A673 (cell line): ENCODE measurements at regions of chr1 and their contacts with region 1.

Region 1: DNA sequence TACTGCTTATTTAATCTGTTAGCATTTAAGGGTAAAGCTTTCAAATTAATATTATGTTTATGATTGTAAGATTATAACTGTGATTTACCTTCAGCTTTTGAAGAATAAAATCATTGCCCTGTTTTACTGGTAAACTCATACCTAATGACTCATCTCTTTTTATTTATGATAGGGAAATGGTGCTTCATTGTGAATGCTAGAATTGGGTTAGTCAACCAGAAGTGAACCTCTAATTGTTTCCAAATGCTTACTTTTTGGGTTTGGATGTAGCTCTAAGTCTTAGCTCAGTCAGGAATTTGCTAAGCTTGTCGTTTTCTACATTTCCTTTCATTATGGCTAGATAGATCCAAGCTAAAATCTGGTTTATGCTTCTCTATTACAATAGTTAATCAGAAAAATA is 59.4 kb downstream of the SLC30A7 start:
- DNase-seq: peak; percentile 86
- H3K4me3 ChIP-seq: no peak overlapping the region
- H3K27ac ChIP-seq: peak overlapping the region; percentile 45
- H3K4me1 ChIP-seq: peaks cover 47% of the 10 kb centered on the region
- H3K27me3 ChIP-seq: no peaks in the 10 kb centered on the region
- CTCF ChIP-seq: no peak

Region 2: DNA sequence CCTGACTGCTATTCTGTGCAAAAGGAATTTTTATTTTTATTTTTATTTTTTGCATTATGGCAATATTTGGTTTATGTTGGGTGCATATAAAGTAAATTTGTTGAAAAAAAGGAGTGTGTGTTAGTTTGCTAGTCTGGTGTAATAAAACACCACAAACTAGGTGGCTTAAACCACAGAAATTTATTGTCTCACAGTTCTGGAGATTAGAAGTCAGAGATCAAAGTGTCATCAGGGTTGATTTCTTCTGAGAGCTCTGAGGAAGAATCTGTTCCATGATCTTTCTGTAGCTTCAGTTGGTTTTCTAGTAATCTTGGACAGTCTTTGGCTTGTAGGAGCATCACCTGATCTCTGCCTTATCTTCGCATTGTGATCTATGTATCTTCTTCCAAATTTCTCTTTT is 53.0 kb before region 1 on chr1:
- CTCF ChIA-PET with region 1: no interaction called
- POLR2A ChIA-PET with region 1: no interaction called
- intact Hi-C with region 1: loop called (anchors 5 kb)
- DNase-seq: no peak
- H3K4me3 ChIP-seq: no peak overlapping the region
- H3K27ac ChIP-seq: no peak overlapping the region
- H3K4me1 ChIP-seq: peaks cover 3% of the 10 kb centered on the region
- H3K27me3 ChIP-seq: no peaks in the 10 kb centered on the region
- CTCF ChIP-seq: no peak

Region 3: GRCh38 chr1:101025657-101026504 is 70.6 kb after region 1 on chr1 and contains the start of gene DPH5:
- CTCF ChIA-PET with region 1: no interaction called
- POLR2A ChIA-PET with region 1: no interaction called
- intact Hi-C with region 1: loop called (anchors 5 kb)
- DNase-seq: peak; percentile 95
- H3K4me3 ChIP-seq: peak within 1 kb of the TSS; percentile 66
- H3K27ac ChIP-seq: peak within 1 kb of the TSS; percentile 76
- H3K4me1 ChIP-seq: peaks cover 27% of the 10 kb centered on the region
- H3K27me3 ChIP-seq: no peaks in the 10 kb centered on the region
- CTCF ChIP-seq: no peak
- total RNA-seq, gene DPH5: 43.2 and 50.5 TPM in 2 replicates

Region 4: GRCh38 chr1:101238681-101239094 is 283.4 kb after region 1 on chr1:
- CTCF ChIA-PET with region 1: no interaction called
- POLR2A ChIA-PET with region 1: no interaction called
- intact Hi-C with region 1: loop called (anchors 10 kb)
- DNase-seq: peak; percentile 91
- H3K4me3 ChIP-seq: peak overlapping the region; percentile 54
- H3K27ac ChIP-seq: no peak overlapping the region
- H3K4me1 ChIP-seq: peaks cover 12% of the 10 kb centered on the region
- H3K27me3 ChIP-seq: no peaks in the 10 kb centered on the region
- CTCF ChIP-seq: peak; percentile 95